MCF 10A (cell line): ENCODE measurements at regions of chr12 and their contacts with region 1.

Region 1: GRCh38 chr12:39103552-39104165 is 198.3 kb upstream of the CPNE8 start:
- DNase-seq: peak; percentile 87
- H3K4me3 Mint-ChIP-seq: no peak overlapping the region
- H3K27ac Mint-ChIP-seq: no peak overlapping the region
- H3K4me1 Mint-ChIP-seq: peaks cover 26% of the 10 kb centered on the region
- H3K27me3 Mint-ChIP-seq: no peaks in the 10 kb centered on the region
- CTCF ChIP-seq: peak; percentile 75

Region 2: GRCh38 chr12:38327356-38327755 is 776.3 kb before region 1 on chr12:
- CTCF ChIA-PET with region 1: interaction called, 17 read pairs
- POLR2A ChIA-PET with region 1: no interaction called
- intact Hi-C with region 1: loop called (anchors 1 kb)
- DNase-seq: no peak
- H3K4me3 Mint-ChIP-seq: no peak overlapping the region
- H3K27ac Mint-ChIP-seq: no peak overlapping the region
- H3K4me1 Mint-ChIP-seq: no peaks in the 10 kb centered on the region
- H3K27me3 Mint-ChIP-seq: no peaks in the 10 kb centered on the region
- CTCF ChIP-seq: no peak

Region 3: GRCh38 chr12:38664661-38665269 is 438.9 kb before region 1 on chr12:
- CTCF ChIA-PET with region 1: interaction called, 4 read pairs
- POLR2A ChIA-PET with region 1: no interaction called
- intact Hi-C with region 1: loop called (anchors 1 kb)
- DNase-seq: peak; percentile 58
- H3K4me3 Mint-ChIP-seq: no peak overlapping the region
- H3K27ac Mint-ChIP-seq: no peak overlapping the region
- H3K4me1 Mint-ChIP-seq: no peaks in the 10 kb centered on the region
- H3K27me3 Mint-ChIP-seq: no peaks in the 10 kb centered on the region
- CTCF ChIP-seq: peak; percentile 38

Region 4: DNA sequence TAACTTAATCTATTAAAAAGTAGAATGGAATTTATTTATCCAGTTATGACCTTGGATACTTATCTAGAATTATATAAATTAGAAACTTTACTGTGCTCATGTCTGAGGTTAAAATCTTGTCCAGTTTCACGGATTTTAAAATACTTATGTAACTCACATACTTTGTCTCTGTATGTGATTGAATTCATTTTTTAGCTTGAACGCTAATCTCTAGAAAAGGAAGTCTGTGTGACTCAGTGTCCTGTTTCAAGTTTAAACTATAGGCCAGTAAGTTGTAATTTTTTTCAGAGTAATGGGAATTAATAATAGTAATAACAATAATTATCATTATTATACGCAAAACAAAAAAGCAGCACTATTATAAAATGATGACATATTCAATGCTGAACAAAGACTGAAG is 366.8 kb before region 1 on chr12:
- CTCF ChIA-PET with region 1: no interaction called
- POLR2A ChIA-PET with region 1: no interaction called
- intact Hi-C with region 1: no loop called
- DNase-seq: no peak
- H3K4me3 Mint-ChIP-seq: no peak overlapping the region
- H3K27ac Mint-ChIP-seq: no peak overlapping the region
- H3K4me1 Mint-ChIP-seq: no peaks in the 10 kb centered on the region
- H3K27me3 Mint-ChIP-seq: no peaks in the 10 kb centered on the region
- CTCF ChIP-seq: no peak

Region 5: DNA sequence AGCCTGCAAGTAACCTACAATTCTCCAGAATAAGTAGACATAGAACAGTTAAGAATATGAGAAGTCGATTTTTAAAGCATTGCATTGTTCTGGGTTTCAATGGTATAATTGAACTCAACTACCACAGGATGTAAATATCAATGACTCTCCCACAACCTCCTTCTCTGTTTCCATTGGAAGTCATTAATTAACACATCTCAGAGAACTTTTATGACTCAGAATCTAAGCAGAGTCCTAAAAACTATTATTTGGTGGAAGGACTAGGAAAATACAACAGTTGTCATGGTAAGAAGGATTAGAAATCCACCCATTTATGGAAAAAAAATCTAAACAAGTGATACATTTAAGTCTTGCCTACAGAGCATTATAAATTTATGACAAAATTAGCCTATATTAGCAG is 177.2 kb before region 1 on chr12:
- CTCF ChIA-PET with region 1: interaction called, 151 read pairs
- POLR2A ChIA-PET with region 1: interaction called, 10 read pairs
- intact Hi-C with region 1: loop called (anchors 1 kb)
- DNase-seq: no peak
- H3K4me3 Mint-ChIP-seq: no peak overlapping the region
- H3K27ac Mint-ChIP-seq: no peak overlapping the region
- H3K4me1 Mint-ChIP-seq: peaks cover 5% of the 10 kb centered on the region
- H3K27me3 Mint-ChIP-seq: no peaks in the 10 kb centered on the region
- CTCF ChIP-seq: no peak

Region 6: DNA sequence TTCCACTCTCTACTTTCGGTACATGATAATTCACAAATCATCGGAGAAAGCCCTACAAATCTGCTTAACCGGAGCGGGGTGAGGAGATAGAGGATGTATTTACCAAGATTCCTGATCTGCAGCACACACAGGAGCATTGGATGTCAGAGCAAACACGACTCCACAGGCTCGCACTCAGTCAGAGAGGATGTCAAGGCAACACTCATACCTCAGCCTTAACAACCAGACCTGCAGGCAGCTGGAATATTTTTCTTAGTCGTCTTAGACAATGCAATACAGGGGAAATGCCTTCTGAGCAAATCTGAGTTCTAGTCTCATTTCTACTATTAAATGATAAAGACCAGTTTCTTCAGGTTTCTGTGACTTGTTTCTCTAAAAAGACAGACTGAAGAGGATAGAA is 39.0 kb before region 1 on chr12:
- CTCF ChIA-PET with region 1: interaction called, 23 read pairs
- POLR2A ChIA-PET with region 1: interaction called, 11 read pairs
- intact Hi-C with region 1: loop called (anchors 5 kb)
- DNase-seq: no peak
- H3K4me3 Mint-ChIP-seq: no peak overlapping the region
- H3K27ac Mint-ChIP-seq: no peak overlapping the region
- H3K4me1 Mint-ChIP-seq: peaks cover 10% of the 10 kb centered on the region
- H3K27me3 Mint-ChIP-seq: no peaks in the 10 kb centered on the region
- CTCF ChIP-seq: no peak

Region 7: GRCh38 chr12:39224971-39225370 is 121.3 kb after region 1 on chr12:
- CTCF ChIA-PET with region 1: no interaction called
- POLR2A ChIA-PET with region 1: no interaction called
- intact Hi-C with region 1: no loop called
- DNase-seq: no peak
- H3K4me3 Mint-ChIP-seq: no peak overlapping the region
- H3K27ac Mint-ChIP-seq: no peak overlapping the region
- H3K4me1 Mint-ChIP-seq: peaks cover under 1% of the 10 kb centered on the region
- H3K27me3 Mint-ChIP-seq: no peaks in the 10 kb centered on the region
- CTCF ChIP-seq: no peak